HepG2 (cell line): ENCODE measurements at regions of chr7 and their contacts with region 1.

Region 1: DNA sequence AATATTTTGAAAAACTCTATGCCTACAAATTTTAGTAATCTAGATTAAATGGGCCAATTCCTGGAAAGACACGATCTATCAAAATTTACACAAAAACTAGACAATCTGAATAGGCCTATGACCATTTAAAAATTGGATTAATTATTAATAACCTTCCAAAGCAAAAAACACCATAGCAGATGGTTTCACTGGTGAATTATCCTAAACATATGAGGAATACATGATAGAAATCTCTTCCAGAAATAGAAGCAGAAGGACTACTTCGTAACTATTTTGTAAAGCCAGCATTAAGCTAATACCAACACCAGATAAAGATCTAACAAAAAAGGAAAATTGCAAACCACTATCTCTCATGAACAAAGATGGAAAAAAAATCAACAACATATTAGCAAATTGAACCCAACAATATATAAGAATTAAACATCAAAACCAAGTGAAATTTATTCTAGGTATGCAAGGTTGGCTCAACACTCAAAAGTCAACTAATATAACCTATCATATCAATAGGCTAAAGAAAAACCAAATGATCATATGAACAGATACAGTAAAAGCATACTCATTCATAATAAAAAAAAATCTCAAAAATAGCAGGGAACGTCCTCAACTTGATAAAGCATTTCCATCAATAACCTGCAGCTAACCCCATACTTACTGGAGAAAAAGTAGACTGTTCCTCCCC is 16.3 kb downstream of the WASL start:
- DNase-seq: no peak
- ATAC-seq: no peak
- H3K4me3 ChIP-seq: no peak overlapping the region
- H3K27ac ChIP-seq: no peak overlapping the region
- H3K4me1 ChIP-seq: peaks cover 72% of the 10 kb centered on the region
- H3K27me3 ChIP-seq: no peaks in the 10 kb centered on the region
- CTCF ChIP-seq: no peak
- EP300 ChIP-seq: no peak
- POLR2A ChIP-seq: no peak
- RAD21 ChIP-seq: no peak

Region 2: GRCh38 chr7:123154231-123154860 is 578.2 kb before region 1 on chr7:
- CTCF ChIA-PET with region 1: no interaction called
- POLR2A ChIA-PET with region 1: no interaction called
- in situ Hi-C with region 1: no loop called
- intact Hi-C with region 1: no loop called
- DNase-seq: peak; percentile 74
- ATAC-seq: peak; percentile 93
- H3K4me3 ChIP-seq: no peak overlapping the region
- H3K27ac ChIP-seq: no peak overlapping the region
- H3K4me1 ChIP-seq: no peaks in the 10 kb centered on the region
- H3K27me3 ChIP-seq: no peaks in the 10 kb centered on the region
- CTCF ChIP-seq: peak; percentile 85
- EP300 ChIP-seq: no peak
- POLR2A ChIP-seq: no peak
- RAD21 ChIP-seq: peak; percentile 38; the same call in 1 of the 2 replicates

Region 3: GRCh38 chr7:123285076-123285732 is 447.3 kb before region 1 on chr7:
- CTCF ChIA-PET with region 1: no interaction called
- POLR2A ChIA-PET with region 1: no interaction called
- in situ Hi-C with region 1: no loop called
- intact Hi-C with region 1: no loop called
- DNase-seq: no peak
- ATAC-seq: no peak
- H3K4me3 ChIP-seq: no peak overlapping the region
- H3K27ac ChIP-seq: no peak overlapping the region
- H3K4me1 ChIP-seq: no peaks in the 10 kb centered on the region
- H3K27me3 ChIP-seq: no peaks in the 10 kb centered on the region
- CTCF ChIP-seq: no peak
- EP300 ChIP-seq: no peak
- POLR2A ChIP-seq: no peak
- RAD21 ChIP-seq: no peak

Region 4: GRCh38 chr7:123715198-123715597 is 17.4 kb before region 1 on chr7:
- CTCF ChIA-PET with region 1: no interaction called
- POLR2A ChIA-PET with region 1: no interaction called
- in situ Hi-C with region 1: no loop called
- intact Hi-C with region 1: loop called (anchors 1 kb)
- DNase-seq: peak; percentile 23
- ATAC-seq: peak; percentile 65; the same call in 2 of the 3 replicates
- H3K4me3 ChIP-seq: no peak overlapping the region
- H3K27ac ChIP-seq: no peak overlapping the region
- H3K4me1 ChIP-seq: peaks cover 48% of the 10 kb centered on the region
- H3K27me3 ChIP-seq: no peaks in the 10 kb centered on the region
- CTCF ChIP-seq: no peak
- EP300 ChIP-seq: no peak
- POLR2A ChIP-seq: no peak
- RAD21 ChIP-seq: no peak

Region 5: DNA sequence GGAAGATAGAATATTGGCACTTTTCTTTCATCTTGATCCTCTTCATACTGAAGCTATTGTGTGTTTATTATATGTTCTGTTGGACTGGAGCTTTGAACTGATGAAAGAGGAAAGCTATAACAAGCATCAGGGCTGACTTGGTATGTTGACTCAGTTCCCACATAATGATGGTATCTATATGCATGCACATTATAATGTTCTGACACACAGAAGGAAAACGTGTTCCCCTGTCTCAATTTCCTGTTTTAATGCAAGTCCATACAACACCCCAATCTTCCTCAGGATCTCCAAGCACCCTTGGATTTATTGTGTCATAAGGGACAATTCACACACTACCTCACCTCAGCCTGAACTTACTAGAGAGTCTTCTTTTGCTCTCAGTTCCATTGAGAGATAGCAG is 24.5 kb after region 1 on chr7:
- CTCF ChIA-PET with region 1: no interaction called
- POLR2A ChIA-PET with region 1: no interaction called
- in situ Hi-C with region 1: no loop called
- intact Hi-C with region 1: no loop called
- DNase-seq: no peak
- ATAC-seq: no peak
- H3K4me3 ChIP-seq: no peak overlapping the region
- H3K27ac ChIP-seq: no peak overlapping the region
- H3K4me1 ChIP-seq: no peaks in the 10 kb centered on the region
- H3K27me3 ChIP-seq: 0 out of 5 replicates have a peak, but pooled peaks cover 0 to 1% of the 10 kb centered on the region in 2 experiments
- CTCF ChIP-seq: no peak
- EP300 ChIP-seq: no peak
- POLR2A ChIP-seq: no peak
- RAD21 ChIP-seq: no peak